ENCODE measurements at regions of chr6 and their contacts with region 1.

Region 1: DNA sequence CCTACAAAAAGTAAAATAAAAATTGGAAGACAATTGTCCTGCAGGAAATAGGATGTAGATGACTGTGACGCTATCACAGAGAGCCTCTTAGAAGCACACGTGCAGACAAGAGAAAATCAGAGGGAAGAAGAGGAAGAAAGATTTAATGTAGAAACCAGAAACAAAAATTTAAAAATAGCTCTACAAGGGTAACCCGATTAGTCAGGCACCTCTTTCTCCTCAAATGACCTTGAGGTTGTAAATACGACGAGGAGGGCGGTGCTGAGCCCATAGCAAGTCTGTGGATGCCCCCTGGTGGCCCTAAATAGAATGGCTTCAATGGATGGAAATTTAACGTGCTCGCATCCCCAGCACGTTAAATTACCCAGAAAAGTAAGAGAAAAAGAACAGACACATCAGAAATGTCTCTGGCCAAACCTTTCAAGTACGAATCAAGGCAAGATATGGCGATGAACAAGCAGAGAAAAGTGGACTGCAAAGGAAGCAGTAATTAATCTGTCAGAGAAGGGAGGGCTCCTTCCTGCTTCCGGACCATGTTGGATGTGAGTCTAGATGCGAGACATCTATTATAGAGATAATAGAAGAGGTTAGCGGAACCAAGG is 4.2 kb upstream of the PRPH2 start:
- DNase-seq: peak; percentile 72 to 79
- ATAC-seq: peak; percentile 88 to 92; a peak in 5 of 6 replicates
- H3K4me3 ChIP-seq: no peak overlapping the region
- H3K27ac ChIP-seq: no peak overlapping the region
- H3K4me1 ChIP-seq: peaks cover 8% of the 10 kb centered on the region; the same call in 2 of the 3 replicates
- CTCF ChIP-seq: peak; percentile 83
- EP300 ChIP-seq: no peak
- POLR2A ChIP-seq: no peak
- RAD21 ChIP-seq: peak; percentile 86 to 87

Region 2: DNA sequence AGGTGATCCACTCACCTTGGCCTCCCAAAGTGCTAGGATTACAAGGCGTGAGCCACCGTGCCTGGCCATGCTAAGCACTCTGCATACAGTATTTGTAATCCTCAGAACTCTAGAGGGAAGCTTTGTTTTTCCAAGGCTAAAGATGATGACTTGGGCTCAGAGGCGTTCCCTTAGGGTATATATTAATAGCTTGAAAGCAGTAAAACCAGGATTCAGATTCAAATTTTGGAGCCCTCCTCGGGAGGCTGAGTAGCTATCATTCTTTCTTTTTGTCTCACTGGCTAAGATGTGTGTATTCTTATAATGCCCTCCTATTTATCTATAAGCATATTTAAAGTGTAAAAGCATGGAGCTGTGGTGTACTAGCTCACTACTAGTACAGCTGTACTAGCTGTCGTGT is 72.7 kb before region 1 on chr6:
- CTCF ChIA-PET with region 1: interaction called, 10 read pairs
- POLR2A ChIA-PET with region 1: no interaction called
- DNase-seq: no peak
- ATAC-seq: no peak
- H3K4me3 ChIP-seq: no peak overlapping the region
- H3K27ac ChIP-seq: no peak overlapping the region
- H3K4me1 ChIP-seq: no peaks in the 10 kb centered on the region
- CTCF ChIP-seq: no peak
- EP300 ChIP-seq: no peak
- POLR2A ChIP-seq: no peak
- RAD21 ChIP-seq: no peak

Region 3: GRCh38 chr6:42661540-42662153 is 64.9 kb before region 1 on chr6:
- CTCF ChIA-PET with region 1: interaction called, 37 read pairs
- POLR2A ChIA-PET with region 1: no interaction called
- DNase-seq: peak; percentile 18 to 60
- ATAC-seq: peak; percentile 62 to 81; a peak in 4 of 6 replicates
- H3K4me3 ChIP-seq: no peak overlapping the region
- H3K27ac ChIP-seq: no peak overlapping the region
- H3K4me1 ChIP-seq: no peaks in the 10 kb centered on the region
- CTCF ChIP-seq: peak; percentile 80
- EP300 ChIP-seq: no peak
- POLR2A ChIP-seq: no peak
- RAD21 ChIP-seq: peak; percentile 81 to 83

Region 4: DNA sequence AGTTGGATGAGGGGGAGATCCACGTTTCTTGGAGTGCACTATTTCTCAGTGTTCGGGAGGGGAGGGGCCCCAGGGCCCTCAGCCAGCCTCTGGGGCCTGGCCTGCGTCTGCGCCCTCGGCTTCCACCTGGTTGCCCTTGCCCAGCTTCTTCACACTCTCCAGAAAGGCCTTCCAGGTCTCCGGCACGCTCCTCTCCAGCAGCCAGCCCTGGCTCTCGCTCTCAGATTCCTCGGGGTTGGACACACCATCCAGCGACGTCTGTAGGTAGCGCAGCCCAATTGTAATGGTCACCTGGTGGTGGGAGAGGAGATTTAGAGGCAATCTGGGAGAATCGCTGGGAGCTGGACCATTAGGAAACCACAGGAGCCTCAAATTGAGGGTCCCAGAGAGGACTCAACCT is 28.4 kb before region 1 on chr6:
- CTCF ChIA-PET with region 1: interaction called, 14 read pairs
- POLR2A ChIA-PET with region 1: no interaction called
- DNase-seq: no peak
- ATAC-seq: peak in 1 of 2 experiments; percentile 38; a peak in 1 of 6 replicates
- H3K4me3 ChIP-seq: no peak overlapping the region
- H3K27ac ChIP-seq: no peak overlapping the region
- H3K4me1 ChIP-seq: no peaks in the 10 kb centered on the region
- CTCF ChIP-seq: no peak
- EP300 ChIP-seq: no peak
- POLR2A ChIP-seq: no peak
- RAD21 ChIP-seq: no peak

Region 5: GRCh38 chr6:42704241-42704936 is 22.2 kb before region 1 on chr6:
- CTCF ChIA-PET with region 1: interaction called, 14 read pairs
- POLR2A ChIA-PET with region 1: no interaction called
- DNase-seq: no peak
- ATAC-seq: peak in 1 of 2 experiments; percentile 40; a peak in 1 of 6 replicates
- H3K4me3 ChIP-seq: no peak overlapping the region
- H3K27ac ChIP-seq: no peak overlapping the region
- H3K4me1 ChIP-seq: no peaks in the 10 kb centered on the region
- CTCF ChIP-seq: no peak
- EP300 ChIP-seq: no peak
- POLR2A ChIP-seq: no peak
- RAD21 ChIP-seq: no peak

Region 6: GRCh38 chr6:42745707-42746462 is 19.3 kb after region 1 on chr6 and contains the start of gene TBCC:
- CTCF ChIA-PET with region 1: interaction called, 10 read pairs
- POLR2A ChIA-PET with region 1: interaction called, 16 read pairs
- DNase-seq: peak; percentile 98
- ATAC-seq: peak; percentile 82 to 88
- H3K4me3 ChIP-seq: peak within 1 kb of the TSS; percentile 73
- H3K27ac ChIP-seq: peak within 1 kb of the TSS; percentile 94 to 98
- H3K4me1 ChIP-seq: peaks cover 18% of the 10 kb centered on the region
- CTCF ChIP-seq: no peak
- EP300 ChIP-seq: no peak
- POLR2A ChIP-seq: peak; percentile 93
- RAD21 ChIP-seq: no peak
- polyA plus RNA-seq, gene TBCC: 10.2 and 10.3 TPM in 2 replicates